Right ventricle myocardium inferior (tissue), 1 donor: ENCODE measurements at regions of chr22 and their contacts with region 1.

Region 1: GRCh38 chr22:36123673-36124630 is 36.6 kb downstream of the APOL3 start:
- DNase-seq: peak; percentile 97
- ATAC-seq: peak; percentile 96

Region 2: DNA sequence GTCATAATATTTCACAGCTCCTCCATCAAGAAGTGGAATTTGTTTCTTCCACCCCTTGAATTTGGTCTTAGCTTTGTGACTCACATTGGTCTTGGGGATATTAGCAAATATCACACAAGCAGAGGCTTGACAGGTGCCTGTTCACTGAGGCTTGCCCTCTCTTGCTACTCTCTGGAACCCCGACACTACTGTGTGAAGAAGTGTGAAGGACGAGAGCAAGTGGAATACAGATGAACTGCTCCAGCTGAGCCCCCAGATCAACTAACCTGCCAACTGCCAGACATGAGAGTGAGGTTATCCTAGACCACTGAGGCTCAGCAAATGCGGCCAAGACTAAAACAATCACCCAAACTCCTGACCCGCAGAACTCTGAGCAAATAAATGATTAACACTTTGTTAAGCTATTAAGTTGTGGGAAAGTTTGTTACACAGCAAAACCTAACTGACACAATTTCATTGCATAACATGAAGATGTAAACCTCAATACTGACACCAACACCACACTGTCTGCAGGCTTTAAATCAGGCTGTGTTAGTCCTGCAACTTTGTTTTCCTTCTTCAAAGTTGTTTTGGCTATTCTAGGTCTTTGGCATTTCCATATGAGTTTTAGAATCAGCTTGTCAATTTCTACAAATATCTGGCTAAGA is 263.7 kb before region 1 on chr22:
- intact Hi-C with region 1: no loop called
- DNase-seq: no peak
- ATAC-seq: no peak

Region 3: GRCh38 chr22:35930933-35931332 is 193.0 kb before region 1 on chr22:
- intact Hi-C with region 1: loop called (anchors 1 kb)
- DNase-seq: no peak
- ATAC-seq: peak; percentile 94

Region 4: GRCh38 chr22:36048911-36049677 is 74.9 kb before region 1 on chr22:
- intact Hi-C with region 1: no loop called
- DNase-seq: no peak
- ATAC-seq: no peak

Region 5: DNA sequence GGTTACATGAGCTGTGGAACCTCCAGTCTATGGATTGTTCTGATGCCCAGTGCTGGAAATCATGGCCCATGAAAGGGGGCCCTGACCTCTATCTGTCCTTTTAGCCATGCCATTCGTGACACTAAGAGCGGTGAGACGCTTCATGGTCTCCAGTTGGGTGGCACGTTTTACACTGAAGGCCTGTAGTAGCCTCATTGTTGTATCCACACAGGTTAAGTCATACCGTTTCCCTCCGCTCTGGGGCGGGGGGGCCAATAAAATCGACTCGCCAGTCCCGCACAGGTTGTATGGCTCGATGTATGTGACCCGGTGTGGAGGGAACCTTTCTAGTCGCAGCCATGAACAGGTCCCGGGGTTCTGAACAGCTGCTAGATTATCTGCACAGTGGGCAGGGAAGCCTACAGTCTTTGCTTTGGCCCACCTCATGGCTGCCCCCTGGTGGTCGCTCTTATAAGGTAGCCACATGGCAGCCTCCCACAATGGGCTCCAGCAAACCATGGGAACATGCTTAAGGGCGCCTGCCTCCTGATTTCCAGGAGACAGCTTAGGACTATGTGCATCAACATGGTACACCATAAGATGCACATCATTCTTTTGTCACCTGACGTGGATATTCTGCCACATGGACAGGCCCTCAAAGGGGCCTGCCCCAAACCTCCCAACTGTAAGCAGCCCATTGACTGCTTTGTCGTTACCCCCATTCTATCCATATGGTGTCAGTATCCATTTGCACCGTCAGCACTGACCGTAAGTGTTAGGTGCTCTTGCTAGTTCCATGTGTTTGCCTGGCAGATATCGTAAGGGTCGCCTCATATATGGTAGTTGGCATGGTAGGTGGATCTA is 56.3 kb after region 1 on chr22:
- intact Hi-C with region 1: no loop called
- DNase-seq: peak; percentile 92
- ATAC-seq: peak; percentile 96